ENCODE measurements at regions of chr3 and their contacts with region 1.

Region 1: GRCh38 chr3:43759297-43759782 is 68.6 kb downstream of the ABHD5 start:
- DNase-seq: peak in 3 of 14 experiments; percentile 24 to 30 (median 24)
- ATAC-seq: no peak
- H3K4me3 ChIP-seq: no peak overlapping the region
- H3K4me3 Mint-ChIP-seq: no peak overlapping the region
- H3K27ac ChIP-seq: no peak overlapping the region
- H3K27ac Mint-ChIP-seq: peak overlapping the region; percentile 19
- H3K4me1 ChIP-seq: peaks cover 40% of the 10 kb centered on the region
- H3K4me1 Mint-ChIP-seq: peaks cover 52% of the 10 kb centered on the region
- H3K27me3 ChIP-seq: no peaks in the 10 kb centered on the region
- H3K27me3 Mint-ChIP-seq: no peaks in the 10 kb centered on the region
- CTCF ChIP-seq: peak; percentile 38

Region 2: DNA sequence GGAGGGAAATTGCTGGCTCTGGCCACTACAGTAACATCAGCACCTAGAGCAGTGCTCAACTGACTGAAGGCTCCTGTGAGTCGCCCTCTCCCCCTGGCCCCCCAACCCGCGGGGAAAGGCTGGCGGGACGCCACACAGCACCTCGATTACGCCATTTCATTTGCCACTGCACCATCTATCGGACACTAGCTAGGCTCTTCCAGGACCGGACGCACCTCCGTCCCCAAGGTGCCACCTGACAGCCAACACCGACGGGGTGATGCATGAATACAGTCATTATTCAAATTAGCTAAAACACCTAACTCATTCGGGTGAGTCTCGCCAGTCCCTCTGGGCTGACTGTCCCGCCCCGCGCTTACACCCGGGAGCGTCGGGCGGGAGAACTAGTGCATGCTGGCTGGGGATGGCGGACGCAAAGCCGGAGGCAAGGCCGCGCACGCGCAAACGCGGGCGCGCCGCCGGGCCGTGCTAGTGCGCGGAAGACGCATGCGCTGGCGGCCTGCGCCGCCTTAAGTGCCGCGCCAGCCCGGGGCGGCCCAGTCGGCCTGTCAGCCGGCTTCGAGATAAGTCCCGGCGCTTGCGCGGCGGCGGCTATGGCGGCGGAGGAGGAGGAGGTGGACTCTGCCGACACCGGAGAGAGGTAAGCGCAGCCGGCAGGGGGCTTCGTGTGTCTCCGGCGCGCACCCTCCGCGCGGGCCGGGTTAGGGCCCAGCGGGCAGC is 68.8 kb before region 1 on chr3 and contains the start of gene ABHD5:
- CTCF ChIA-PET with region 1: no interaction called
- POLR2A ChIA-PET with region 1: interaction called, 7 read pairs
- intact Hi-C with region 1: loop called in 1 of 2 experiments (anchors 2 kb)
- DNase-seq: peak; percentile 92 to 99 (median 97)
- ATAC-seq: peak; percentile 92
- H3K4me3 ChIP-seq: peak within 1 kb of the TSS; percentile 64
- H3K4me3 Mint-ChIP-seq: peak within 1 kb of the TSS; percentile 96
- H3K27ac ChIP-seq: peak within 1 kb of the TSS; percentile 59 to 67
- H3K27ac Mint-ChIP-seq: peak within 1 kb of the TSS; percentile 93
- H3K4me1 ChIP-seq: peaks cover 18% of the 10 kb centered on the region
- H3K4me1 Mint-ChIP-seq: peaks cover 33% of the 10 kb centered on the region
- H3K27me3 ChIP-seq: no peaks in the 10 kb centered on the region
- H3K27me3 Mint-ChIP-seq: no peaks in the 10 kb centered on the region
- CTCF ChIP-seq: peak; percentile 48
- total RNA-seq, gene ABHD5: 6.4 to 9.3 TPM

Region 3: GRCh38 chr3:43776101-43776500 is 16.8 kb after region 1 on chr3:
- CTCF ChIA-PET with region 1: no interaction called
- POLR2A ChIA-PET with region 1: no interaction called
- intact Hi-C with region 1: no loop called
- DNase-seq: no peak
- ATAC-seq: no peak
- H3K4me3 ChIP-seq: no peak overlapping the region
- H3K4me3 Mint-ChIP-seq: no peak overlapping the region
- H3K27ac ChIP-seq: no peak overlapping the region
- H3K27ac Mint-ChIP-seq: no peak overlapping the region
- H3K4me1 ChIP-seq: peaks cover 15% of the 10 kb centered on the region
- H3K4me1 Mint-ChIP-seq: peaks cover 11% of the 10 kb centered on the region
- H3K27me3 ChIP-seq: no peaks in the 10 kb centered on the region
- H3K27me3 Mint-ChIP-seq: peaks cover 6% of the 10 kb centered on the region
- CTCF ChIP-seq: no peak

Measured in CD4-positive, alpha-beta T cell (primary cell).